ENCODE measurements at regions of chr5 and their contacts with region 1.

Region 1: DNA sequence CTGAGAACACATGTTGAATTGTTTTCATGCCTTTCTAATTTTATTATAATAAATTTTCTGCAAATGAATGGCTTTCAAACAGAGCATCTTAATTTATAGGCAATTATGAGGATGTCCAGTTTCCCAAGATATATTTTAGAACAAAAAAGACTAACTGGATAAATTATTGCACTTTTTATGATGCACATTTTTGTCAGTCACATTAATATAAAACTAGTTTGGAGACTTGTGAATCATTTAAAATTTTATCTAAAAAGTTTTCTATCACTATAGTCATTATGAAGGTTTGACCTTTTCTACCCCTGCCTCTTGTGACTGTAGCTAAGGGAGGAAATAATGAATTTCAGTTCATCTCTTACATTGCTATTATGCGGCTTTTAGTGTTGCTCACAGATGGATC is 393.8 kb downstream of the TAF11L14 start:
- H3K4me3 Mint-ChIP-seq: no peak overlapping the region
- H3K27ac Mint-ChIP-seq: no peak overlapping the region
- H3K4me1 Mint-ChIP-seq: no peaks in the 10 kb centered on the region
- H3K27me3 Mint-ChIP-seq: no peaks in the 10 kb centered on the region

Region 2: DNA sequence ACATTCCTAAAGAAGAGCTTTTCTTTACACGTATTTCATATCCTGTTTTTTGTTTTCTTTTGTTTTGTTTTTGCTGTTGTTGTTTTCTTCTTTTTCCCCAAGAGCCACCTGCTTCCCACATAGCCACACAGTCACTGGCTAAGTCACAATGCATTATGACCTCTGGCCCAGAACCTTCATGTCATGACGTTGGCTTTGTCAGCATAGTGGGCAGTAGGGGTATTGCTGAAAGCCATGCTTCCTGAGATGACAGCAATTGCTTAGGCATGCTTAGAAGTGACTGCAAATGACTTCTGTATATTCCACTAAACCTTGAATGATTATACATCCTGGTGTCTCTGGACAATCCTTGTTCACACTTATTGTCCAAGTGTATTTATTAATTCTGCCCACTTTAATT is 18.0 kb before region 1 on chr5:
- intact Hi-C with region 1: loop called (anchors 2 kb)
- H3K4me3 Mint-ChIP-seq: no peak overlapping the region
- H3K27ac Mint-ChIP-seq: no peak overlapping the region
- H3K4me1 Mint-ChIP-seq: no peaks in the 10 kb centered on the region
- H3K27me3 Mint-ChIP-seq: no peaks in the 10 kb centered on the region

Region 3: DNA sequence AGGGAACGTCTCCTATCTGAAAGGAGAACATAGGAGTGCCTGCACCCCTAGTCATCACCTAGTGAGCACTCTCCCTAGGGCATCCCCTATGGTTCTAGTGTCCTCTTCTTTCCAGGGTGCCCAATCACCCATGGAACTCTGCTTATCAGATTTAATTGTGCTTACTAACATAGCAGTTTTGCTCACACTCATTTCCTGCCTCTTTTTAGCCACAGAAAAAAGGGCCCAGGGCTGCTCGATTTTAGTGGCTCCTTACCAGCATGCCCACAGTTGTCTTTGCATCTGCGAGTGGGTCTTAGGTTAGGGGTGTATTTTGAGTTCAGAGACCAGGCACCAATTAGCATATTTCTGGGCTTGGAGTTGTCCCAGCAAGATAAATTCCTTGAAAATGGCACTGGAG is 716.4 kb after region 1 on chr5:
- intact Hi-C with region 1: no loop called
- H3K4me3 Mint-ChIP-seq: peak overlapping the region; percentile 50
- H3K27ac Mint-ChIP-seq: peak overlapping the region; percentile 93
- H3K4me1 Mint-ChIP-seq: peaks cover 17% of the 10 kb centered on the region
- H3K27me3 Mint-ChIP-seq: no peaks in the 10 kb centered on the region